SK-N-SH (cell line): ENCODE measurements at regions of chr3 and their contacts with region 1.

Region 1: DNA sequence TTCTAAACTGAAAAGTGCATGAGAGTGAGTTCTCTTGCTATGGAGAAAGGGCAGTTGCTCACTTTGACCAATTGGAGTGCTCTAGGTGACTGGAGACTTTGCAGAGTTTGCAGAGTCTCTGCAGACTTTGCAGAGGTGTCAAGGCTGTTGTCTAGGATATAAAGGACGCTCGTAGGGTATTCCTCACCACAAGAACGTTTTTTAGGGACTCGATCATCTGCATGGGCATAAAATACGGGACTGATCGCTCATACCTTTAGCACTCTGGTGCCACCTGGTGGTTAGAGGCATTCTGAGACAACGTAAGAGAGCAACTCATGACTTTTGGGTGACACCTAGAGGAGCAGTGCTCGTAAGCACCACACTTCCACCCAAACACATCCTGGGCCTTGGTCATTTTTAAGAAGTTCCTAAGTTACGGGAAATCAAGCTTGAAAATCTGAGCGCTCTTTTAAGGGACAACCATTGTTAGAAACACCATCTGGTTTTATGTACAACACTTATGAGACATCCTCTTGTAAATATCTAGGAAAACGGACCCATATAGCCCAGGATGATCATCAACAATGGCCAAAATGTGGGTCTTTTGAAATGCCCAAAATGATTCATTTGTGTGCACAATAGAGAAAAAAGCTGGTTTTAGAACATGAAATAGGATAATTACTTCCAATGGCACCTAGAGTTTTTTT is 51.6 kb upstream of the XCR1 start:
- DNase-seq: peak; percentile 64
- H3K4me3 ChIP-seq: peak overlapping the region in 1 of 2 experiments; percentile 24; a peak in 1 of 4 replicates
- H3K27ac ChIP-seq: no peak overlapping the region
- H3K4me1 ChIP-seq: no peaks in the 10 kb centered on the region
- H3K27me3 ChIP-seq: 0 out of 2 replicates have a peak, but pooled peaks cover 5% of the 10 kb centered on the region
- CTCF ChIP-seq: peak; percentile 100
- EP300 ChIP-seq: no peak
- RAD21 ChIP-seq: peak; percentile 98

Region 2: GRCh38 chr3:45929042-45929679 is 149.7 kb before region 1 on chr3:
- CTCF ChIA-PET with region 1: interaction called, 280 read pairs
- POLR2A ChIA-PET with region 1: no interaction called
- DNase-seq: peak; percentile 84
- H3K4me3 ChIP-seq: no peak overlapping the region; a peak in 1 of 4 replicates
- H3K27ac ChIP-seq: no peak overlapping the region
- H3K4me1 ChIP-seq: no peaks in the 10 kb centered on the region; a peak in 1 of 4 replicates
- H3K27me3 ChIP-seq: no peaks in the 10 kb centered on the region
- CTCF ChIP-seq: peak; percentile 78
- EP300 ChIP-seq: no peak
- RAD21 ChIP-seq: peak; percentile 88

Region 3: GRCh38 chr3:45950686-45951600 is 127.9 kb before region 1 on chr3:
- CTCF ChIA-PET with region 1: interaction called, 15 read pairs
- POLR2A ChIA-PET with region 1: no interaction called
- DNase-seq: no peak
- H3K4me3 ChIP-seq: no peak overlapping the region
- H3K27ac ChIP-seq: no peak overlapping the region
- H3K4me1 ChIP-seq: no peaks in the 10 kb centered on the region
- H3K27me3 ChIP-seq: no peaks in the 10 kb centered on the region
- CTCF ChIP-seq: no peak
- EP300 ChIP-seq: no peak
- RAD21 ChIP-seq: no peak

Region 4: DNA sequence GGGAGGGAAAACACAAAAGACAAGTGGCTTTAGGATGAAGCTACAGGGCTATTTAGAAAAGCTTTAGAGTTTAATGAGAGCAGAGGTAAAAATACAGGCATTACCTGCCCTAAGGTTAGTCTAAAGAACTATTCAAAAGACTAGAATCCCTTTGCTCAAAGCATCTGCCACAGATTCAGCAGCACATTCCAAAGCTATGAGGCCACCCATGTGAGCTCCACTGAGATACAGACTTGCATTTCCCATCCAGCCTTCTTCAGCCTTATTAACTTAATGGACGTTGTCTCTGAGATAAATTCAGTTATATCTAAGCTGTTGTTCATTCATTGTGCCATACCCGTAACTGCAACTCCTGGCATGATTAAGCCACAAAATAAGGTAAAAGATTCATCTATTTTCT is 110.2 kb before region 1 on chr3:
- CTCF ChIA-PET with region 1: interaction called, 60 read pairs
- POLR2A ChIA-PET with region 1: no interaction called
- DNase-seq: no peak
- H3K4me3 ChIP-seq: no peak overlapping the region
- H3K27ac ChIP-seq: no peak overlapping the region
- H3K4me1 ChIP-seq: peaks cover 0 to 4% of the 10 kb centered on the region in 2 experiments; a peak in 3 of 4 replicates
- H3K27me3 ChIP-seq: no peaks in the 10 kb centered on the region
- CTCF ChIP-seq: no peak
- EP300 ChIP-seq: no peak
- RAD21 ChIP-seq: no peak

Region 5: GRCh38 chr3:46006238-46007032 is 72.4 kb before region 1 on chr3:
- CTCF ChIA-PET with region 1: no interaction called
- POLR2A ChIA-PET with region 1: no interaction called
- DNase-seq: no peak
- H3K4me3 ChIP-seq: no peak overlapping the region
- H3K27ac ChIP-seq: no peak overlapping the region
- H3K4me1 ChIP-seq: no peaks in the 10 kb centered on the region
- H3K27me3 ChIP-seq: peaks cover 6% of the 10 kb centered on the region; the same call in 1 of the 2 replicates
- CTCF ChIP-seq: no peak
- EP300 ChIP-seq: no peak
- RAD21 ChIP-seq: no peak

Region 6: DNA sequence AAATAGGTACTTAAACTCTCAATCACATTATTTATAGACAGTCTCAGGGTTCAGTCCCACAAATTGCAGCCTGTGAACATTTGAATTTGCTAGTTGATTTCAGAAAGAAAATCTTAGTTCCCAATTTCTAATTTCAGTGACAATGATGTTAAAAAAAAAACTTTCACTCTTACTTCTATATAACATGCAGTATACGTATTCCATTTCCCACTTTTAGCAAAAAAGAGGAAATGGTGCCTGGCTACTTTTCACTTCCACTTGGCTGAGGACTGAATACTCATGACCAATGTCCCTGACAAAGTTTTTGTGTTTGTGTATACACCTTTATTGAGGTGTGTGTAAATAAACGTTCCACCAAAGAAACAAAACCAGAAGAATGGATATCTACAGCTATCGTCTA is 19.4 kb before region 1 on chr3:
- CTCF ChIA-PET with region 1: interaction called, 106 read pairs
- POLR2A ChIA-PET with region 1: no interaction called
- DNase-seq: no peak
- H3K4me3 ChIP-seq: no peak overlapping the region
- H3K27ac ChIP-seq: no peak overlapping the region
- H3K4me1 ChIP-seq: no peaks in the 10 kb centered on the region
- H3K27me3 ChIP-seq: peaks cover 33% of the 10 kb centered on the region; the same call in 1 of the 2 replicates
- CTCF ChIP-seq: no peak
- EP300 ChIP-seq: no peak
- RAD21 ChIP-seq: no peak

Region 7: DNA sequence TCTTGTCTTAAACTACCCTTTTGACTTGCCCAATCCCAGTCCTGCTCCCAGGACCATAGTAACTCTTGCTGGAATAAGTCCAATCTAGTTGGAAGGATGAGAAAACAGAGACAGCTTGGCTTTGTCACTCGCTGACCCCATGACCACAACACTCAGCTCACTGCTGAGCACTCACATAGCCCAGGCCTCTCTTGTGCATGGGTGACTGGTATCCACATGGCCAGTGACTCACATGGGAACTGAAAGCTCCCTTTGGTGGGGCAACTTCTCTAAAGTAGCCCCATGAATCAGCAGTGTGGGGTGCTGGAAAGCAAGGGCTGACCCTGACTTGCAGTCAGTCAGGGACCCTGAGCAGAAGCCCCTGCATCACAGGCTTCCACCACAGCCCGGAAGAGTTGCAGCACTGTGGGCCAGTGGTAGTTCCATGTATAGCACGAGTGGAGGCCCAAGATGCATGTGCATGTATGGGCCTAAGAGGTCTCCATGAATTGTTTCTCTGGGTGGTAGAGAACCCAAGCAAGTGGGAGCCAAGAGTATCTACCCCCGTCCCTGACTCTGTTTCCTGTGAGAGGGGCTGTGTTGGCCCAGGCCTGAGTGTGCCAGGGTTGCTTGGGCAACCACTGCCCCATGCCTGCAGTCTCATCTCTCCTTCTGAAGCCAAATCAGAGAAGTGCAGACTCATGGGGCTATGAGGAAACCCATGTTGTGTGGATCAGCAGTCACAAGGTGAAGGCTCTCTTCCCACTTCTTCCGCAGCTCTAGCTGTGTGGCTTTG is 10.6 kb after region 1 on chr3:
- CTCF ChIA-PET with region 1: interaction called, 67 read pairs
- POLR2A ChIA-PET with region 1: no interaction called
- DNase-seq: no peak
- H3K4me3 ChIP-seq: no peak overlapping the region
- H3K27ac ChIP-seq: no peak overlapping the region
- H3K4me1 ChIP-seq: no peaks in the 10 kb centered on the region
- H3K27me3 ChIP-seq: peaks cover 4% of the 10 kb centered on the region; the same call in 1 of the 2 replicates
- CTCF ChIP-seq: no peak
- EP300 ChIP-seq: no peak
- RAD21 ChIP-seq: no peak

Region 8: DNA sequence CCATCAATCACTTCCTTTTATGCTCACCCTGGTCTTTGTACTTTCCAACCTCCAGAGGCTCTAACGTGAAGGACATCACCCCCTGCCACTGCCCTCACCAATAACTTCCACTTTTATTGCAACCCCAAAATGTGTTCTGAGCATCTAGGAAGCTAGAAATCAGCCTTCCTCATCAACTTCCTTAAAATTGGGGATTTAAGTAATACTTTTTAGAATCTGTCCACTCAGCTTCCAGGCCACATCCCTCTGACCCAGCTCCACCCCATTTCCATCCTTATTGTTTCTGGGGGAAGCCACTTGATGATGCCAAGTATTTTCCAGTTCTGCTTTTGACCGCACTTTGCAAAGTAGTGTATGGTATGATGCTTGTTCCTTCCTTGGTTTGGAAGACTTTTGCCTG is 22.0 kb after region 1 on chr3:
- CTCF ChIA-PET with region 1: interaction called, 12 read pairs
- POLR2A ChIA-PET with region 1: no interaction called
- DNase-seq: no peak
- H3K4me3 ChIP-seq: no peak overlapping the region
- H3K27ac ChIP-seq: no peak overlapping the region
- H3K4me1 ChIP-seq: no peaks in the 10 kb centered on the region
- H3K27me3 ChIP-seq: peaks cover 19% of the 10 kb centered on the region; the same call in 1 of the 2 replicates
- CTCF ChIP-seq: no peak
- EP300 ChIP-seq: no peak
- RAD21 ChIP-seq: no peak

Region 9: DNA sequence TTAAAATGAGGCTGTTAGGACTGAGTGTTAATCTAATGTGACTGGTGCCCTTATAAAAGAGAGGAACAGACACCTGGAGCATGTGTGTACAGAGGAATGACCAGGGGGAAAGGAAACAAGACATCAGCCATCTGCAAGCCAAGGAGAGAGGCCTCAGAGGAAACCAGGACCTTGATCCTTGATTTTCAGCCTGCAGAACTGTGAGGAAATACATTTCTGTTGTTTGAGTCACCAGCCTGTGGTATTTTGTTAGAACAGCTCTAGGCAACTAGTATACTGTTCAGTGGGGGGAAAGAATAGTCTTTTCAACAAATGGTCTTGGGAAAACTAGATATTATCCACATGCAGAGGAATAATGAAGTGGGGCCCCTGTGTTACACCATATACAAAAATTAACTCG is 48.6 kb after region 1 on chr3:
- CTCF ChIA-PET with region 1: no interaction called
- POLR2A ChIA-PET with region 1: no interaction called
- DNase-seq: no peak
- H3K4me3 ChIP-seq: no peak overlapping the region
- H3K27ac ChIP-seq: 0 out of 4 replicates have a peak overlapping the region, but pooled peaks of 1 of the 2 experiments have one; percentile 10
- H3K4me1 ChIP-seq: no peaks in the 10 kb centered on the region
- H3K27me3 ChIP-seq: peaks cover 6% of the 10 kb centered on the region; the same call in 1 of the 2 replicates
- CTCF ChIP-seq: no peak
- EP300 ChIP-seq: no peak
- RAD21 ChIP-seq: no peak